CD8-positive, alpha-beta T cell (primary cell): ENCODE measurements at regions of chr4 and their contacts with region 1.

Region 1: DNA sequence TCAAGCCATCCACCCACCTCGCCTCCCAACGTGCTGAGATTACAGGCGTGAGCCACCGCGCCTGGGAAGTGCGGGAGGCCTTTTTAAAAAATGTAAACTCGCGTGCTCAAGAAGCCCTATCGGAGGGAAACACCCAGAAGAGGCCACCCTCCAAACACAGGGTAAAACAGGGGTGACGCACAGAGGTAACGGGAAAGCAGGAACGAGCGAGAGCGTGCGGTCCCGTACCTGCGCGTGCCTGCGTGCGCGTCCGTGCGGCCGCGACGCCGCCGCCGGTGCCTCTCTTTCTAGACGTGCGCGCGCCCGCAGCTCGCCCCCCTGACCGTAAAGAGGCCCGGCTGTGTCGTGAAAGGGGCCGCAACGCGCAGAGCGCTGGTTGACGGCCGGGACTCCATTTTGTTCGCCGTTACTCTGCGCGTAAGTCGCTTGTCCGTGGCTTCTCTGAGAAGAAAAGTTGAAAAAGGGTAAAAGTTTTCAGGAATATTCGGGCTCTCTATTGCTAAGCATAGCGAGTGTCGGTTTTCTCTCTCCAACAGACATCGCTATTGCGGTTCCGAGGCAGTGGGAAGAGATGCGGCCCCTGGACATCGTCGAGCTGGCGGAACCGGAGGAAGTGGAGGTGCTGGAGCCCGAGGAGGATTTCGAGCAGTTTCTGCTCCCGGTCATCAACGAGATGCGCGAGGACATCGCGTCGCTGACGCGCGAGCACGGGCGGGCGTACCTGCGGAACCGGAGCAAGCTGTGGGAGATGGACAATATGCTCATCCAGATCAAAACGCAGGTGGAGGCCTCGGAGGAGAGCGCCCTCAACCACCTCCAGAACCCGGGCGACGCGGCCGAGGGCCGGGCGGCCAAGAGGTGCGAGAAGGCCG is at the start of gene MRFAP1:
- DNase-seq: peak; percentile 90 to 98 (median 95)
- ATAC-seq: peak; percentile 79
- H3K4me3 ChIP-seq: peak within 1 kb of the TSS; percentile 96 to 97
- H3K4me3 Mint-ChIP-seq: peak within 1 kb of the TSS; percentile 99
- H3K27ac ChIP-seq: peak within 1 kb of the TSS; percentile 96
- H3K27ac Mint-ChIP-seq: peak within 1 kb of the TSS; percentile 99
- H3K4me1 ChIP-seq: peaks cover 17% of the 10 kb centered on the region
- H3K4me1 Mint-ChIP-seq: peaks cover 41% of the 10 kb centered on the region
- H3K27me3 ChIP-seq: no peaks in the 10 kb centered on the region
- H3K27me3 Mint-ChIP-seq: no peaks in the 10 kb centered on the region
- CTCF ChIP-seq: no peak
- total RNA-seq, gene MRFAP1: 177 to 183 TPM

Region 2: GRCh38 chr4:6658597-6659075 is 18.1 kb after region 1 on chr4:
- CTCF ChIA-PET with region 1: interaction called, 5 read pairs
- POLR2A ChIA-PET with region 1: interaction called, 11 read pairs
- intact Hi-C with region 1: loop called in 1 of 2 experiments (anchors 2 kb)
- DNase-seq: peak; percentile 19 to 81 (median 49)
- ATAC-seq: peak; percentile 91
- H3K4me3 ChIP-seq: peak overlapping the region; percentile 35 to 43
- H3K4me3 Mint-ChIP-seq: peak overlapping the region; percentile 74
- H3K27ac ChIP-seq: no peak overlapping the region
- H3K27ac Mint-ChIP-seq: no peak overlapping the region
- H3K4me1 ChIP-seq: peaks cover 8% of the 10 kb centered on the region
- H3K4me1 Mint-ChIP-seq: peaks cover 11% of the 10 kb centered on the region
- H3K27me3 ChIP-seq: no peaks in the 10 kb centered on the region
- H3K27me3 Mint-ChIP-seq: peaks cover 9% of the 10 kb centered on the region
- CTCF ChIP-seq: no peak

Region 3: DNA sequence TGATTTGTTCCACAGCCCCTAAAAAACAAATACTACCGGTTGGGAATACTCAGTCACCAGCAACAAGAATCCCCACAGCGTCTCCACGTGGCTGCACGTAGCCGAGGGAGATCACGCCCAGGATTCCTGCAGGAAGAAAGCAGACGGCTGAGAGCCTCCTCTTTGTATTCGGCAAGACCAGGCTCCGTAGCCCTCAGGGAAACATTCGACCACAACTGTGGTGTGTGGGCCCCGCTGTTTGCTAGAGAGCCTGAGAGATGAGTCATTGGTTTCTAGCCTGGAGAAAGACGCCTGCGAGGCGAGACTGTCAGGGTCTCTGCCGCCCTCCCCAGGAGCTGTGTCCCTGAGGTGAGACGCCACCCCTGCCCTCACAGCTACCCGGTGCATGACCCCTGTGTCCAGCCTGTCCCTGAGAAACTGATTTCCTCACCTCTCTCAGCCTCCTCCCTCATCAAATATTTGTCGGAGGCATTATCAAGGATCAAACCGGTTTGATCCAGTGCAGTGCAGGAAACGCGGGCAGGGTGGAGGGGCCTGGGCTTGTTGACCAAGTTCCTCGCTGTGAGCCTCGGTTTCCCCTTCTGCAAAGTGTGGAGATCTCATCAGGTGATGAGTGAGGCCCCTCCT is 48.5 kb after region 1 on chr4:
- CTCF ChIA-PET with region 1: interaction called, 3 read pairs
- POLR2A ChIA-PET with region 1: interaction called, 25 read pairs
- intact Hi-C with region 1: loop called in 1 of 2 experiments (anchors 1 kb)
- DNase-seq: peak; percentile 53 to 89 (median 81)
- ATAC-seq: peak; percentile 79
- H3K4me3 ChIP-seq: peak overlapping the region; percentile 50 to 58
- H3K4me3 Mint-ChIP-seq: peak overlapping the region; percentile 82
- H3K27ac ChIP-seq: peak overlapping the region; percentile 58 to 75
- H3K27ac Mint-ChIP-seq: peak overlapping the region; percentile 94
- H3K4me1 ChIP-seq: peaks cover 61% of the 10 kb centered on the region
- H3K4me1 Mint-ChIP-seq: peaks cover 75% of the 10 kb centered on the region
- H3K27me3 ChIP-seq: no peaks in the 10 kb centered on the region
- H3K27me3 Mint-ChIP-seq: no peaks in the 10 kb centered on the region
- CTCF ChIP-seq: no peak

Region 4: DNA sequence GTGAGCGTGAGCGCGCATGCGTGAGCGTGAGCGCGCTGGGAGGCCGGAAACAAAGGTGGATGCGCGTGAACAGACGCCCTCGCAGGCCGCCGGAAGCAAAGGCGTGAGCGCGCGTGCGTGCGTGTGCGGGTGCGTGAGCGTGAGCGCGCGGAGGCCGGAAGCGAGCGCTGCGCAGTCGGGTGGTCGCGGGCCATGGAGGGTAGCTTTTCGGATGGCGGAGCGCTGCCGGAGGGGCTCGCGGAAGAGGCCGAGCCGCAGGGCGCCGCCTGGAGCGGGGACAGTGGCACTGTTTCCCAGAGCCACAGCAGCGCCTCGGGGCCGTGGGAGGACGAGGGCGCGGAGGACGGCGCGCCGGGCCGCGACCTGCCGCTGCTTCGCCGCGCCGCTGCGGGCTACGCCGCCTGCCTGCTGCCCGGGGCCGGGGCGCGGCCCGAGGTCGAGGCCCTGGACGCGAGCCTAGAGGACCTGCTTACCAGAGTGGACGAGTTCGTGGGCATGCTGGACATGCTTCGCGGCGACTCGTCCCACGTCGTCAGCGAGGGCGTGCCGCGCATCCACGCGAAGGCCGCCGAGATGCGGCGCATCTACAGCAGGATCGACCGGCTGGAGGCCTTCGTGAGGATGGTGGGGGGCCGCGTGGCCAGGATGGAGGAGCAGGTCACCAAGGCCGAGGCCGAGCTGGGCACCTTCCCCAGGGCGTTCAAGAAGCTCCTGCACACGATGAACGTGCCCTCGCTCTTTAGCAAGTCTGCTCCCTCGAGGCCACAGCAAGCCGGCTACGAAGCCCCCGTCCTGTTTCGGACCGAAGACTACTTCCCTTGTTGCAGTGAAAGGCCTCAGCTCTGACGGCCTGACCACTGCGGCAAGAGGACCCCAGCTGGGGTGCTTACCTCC is 75.7 kb after region 1 on chr4 and contains the start of gene BLOC1S4:
- CTCF ChIA-PET with region 1: interaction called, 19 read pairs
- POLR2A ChIA-PET with region 1: interaction called, 19 read pairs
- intact Hi-C with region 1: loop called (anchors 1 kb)
- DNase-seq: peak; percentile 77 to 98 (median 88)
- ATAC-seq: peak; percentile 83
- H3K4me3 ChIP-seq: peak within 1 kb of the TSS; percentile 74 to 81
- H3K4me3 Mint-ChIP-seq: peak within 1 kb of the TSS; percentile 95
- H3K27ac ChIP-seq: peak within 1 kb of the TSS; percentile 75 to 80
- H3K27ac Mint-ChIP-seq: peak within 1 kb of the TSS; percentile 97
- H3K4me1 ChIP-seq: peaks cover 25% of the 10 kb centered on the region
- H3K4me1 Mint-ChIP-seq: peaks cover 48% of the 10 kb centered on the region
- H3K27me3 ChIP-seq: no peaks in the 10 kb centered on the region
- H3K27me3 Mint-ChIP-seq: no peaks in the 10 kb centered on the region
- CTCF ChIP-seq: peak; percentile 18
- total RNA-seq, gene BLOC1S4: 29.7 to 30.7 TPM

Region 5: DNA sequence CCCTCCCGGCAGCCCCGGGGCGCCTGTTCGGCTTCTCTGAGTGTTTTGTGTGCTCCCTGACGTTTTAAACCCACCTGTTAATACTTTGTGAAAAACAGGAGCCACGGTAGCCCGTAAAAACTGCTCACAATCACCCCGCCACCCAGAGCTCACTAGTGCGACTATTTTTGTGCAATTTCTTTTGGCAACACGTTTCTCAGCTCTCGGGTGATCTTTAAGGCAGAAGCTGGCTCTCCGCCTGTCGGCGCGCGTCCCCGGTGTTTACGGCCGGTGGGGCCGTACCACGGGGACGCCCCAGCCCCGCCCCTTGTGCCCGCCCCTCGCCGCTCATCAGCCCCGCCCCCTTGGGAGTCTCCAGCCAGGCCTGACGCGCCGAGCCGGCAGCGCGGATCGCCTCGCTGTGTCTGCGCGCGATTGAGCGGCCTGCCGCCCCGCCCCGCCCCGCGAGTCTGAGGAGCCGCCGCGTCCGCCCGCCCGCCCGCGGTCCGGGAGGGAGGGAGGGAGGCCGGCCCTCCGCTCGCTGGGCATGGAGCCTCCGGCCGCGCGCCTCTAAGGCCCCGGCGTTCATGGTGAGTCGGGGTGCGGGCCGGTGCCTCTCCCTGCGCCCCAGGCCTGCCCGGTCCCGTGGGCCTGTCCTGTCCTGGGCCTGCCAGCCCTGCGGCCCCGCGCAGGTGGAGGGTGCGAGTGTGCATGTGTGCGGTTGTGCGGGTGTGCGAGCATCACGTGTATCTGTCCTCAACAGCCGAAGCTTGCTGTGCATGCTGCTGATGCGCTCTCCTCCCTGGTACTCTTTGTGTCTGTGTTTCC is 346.5 kb after region 1 on chr4:
- CTCF ChIA-PET with region 1: no interaction called
- POLR2A ChIA-PET with region 1: interaction called, 8 read pairs
- intact Hi-C with region 1: loop called (anchors 1 to 2 kb)
- DNase-seq: peak; percentile 87 to 97 (median 93)
- ATAC-seq: peak; percentile 92
- H3K4me3 ChIP-seq: peak overlapping the region; percentile 91 to 94
- H3K4me3 Mint-ChIP-seq: peak overlapping the region; percentile 94
- H3K27ac ChIP-seq: peak overlapping the region; percentile 78 to 88
- H3K27ac Mint-ChIP-seq: peak overlapping the region; percentile 98
- H3K4me1 ChIP-seq: peaks cover 55% of the 10 kb centered on the region
- H3K4me1 Mint-ChIP-seq: peaks cover 81% of the 10 kb centered on the region
- H3K27me3 ChIP-seq: no peaks in the 10 kb centered on the region
- H3K27me3 Mint-ChIP-seq: no peaks in the 10 kb centered on the region
- CTCF ChIP-seq: no peak